H1 (cell line): ENCODE measurements at regions of chr2 and their contacts with region 1.

Region 1: DNA sequence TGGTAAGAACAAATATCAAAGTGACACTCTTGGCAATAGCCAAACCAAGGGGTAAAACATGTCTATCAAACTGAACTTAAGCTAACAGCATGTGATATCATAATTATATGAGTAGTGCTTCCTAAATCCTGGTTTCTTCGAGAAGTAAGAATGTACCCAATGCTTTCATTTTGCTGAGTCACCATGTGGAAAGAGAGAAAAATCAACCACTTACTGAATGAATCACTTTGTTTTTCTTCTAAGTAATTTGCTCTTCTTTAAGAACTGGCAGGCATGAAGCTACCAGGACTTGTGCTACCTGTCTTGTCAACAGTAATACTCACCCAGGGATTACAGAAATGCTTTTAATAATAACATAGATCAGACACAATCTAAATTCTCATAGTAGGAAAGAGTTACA is 19.0 kb upstream of the DUSP19 start:
- DNase-seq: no peak
- H3K4me3 ChIP-seq: no peak overlapping the region
- H3K27ac ChIP-seq: no peak overlapping the region
- H3K4me1 ChIP-seq: no peaks in the 10 kb centered on the region
- H3K27me3 ChIP-seq: no peaks in the 10 kb centered on the region
- CTCF ChIP-seq: no peak
- EP300 ChIP-seq: no peak
- POLR2A ChIP-seq: no peak
- RAD21 ChIP-seq: no peak

Region 2: GRCh38 chr2:182937870-182938269 is 121.7 kb before region 1 on chr2:
- CTCF ChIA-PET with region 1: no interaction called
- POLR2A ChIA-PET with region 1: no interaction called
- DNase-seq: no peak
- H3K4me3 ChIP-seq: no peak overlapping the region
- H3K27ac ChIP-seq: no peak overlapping the region
- H3K4me1 ChIP-seq: no peaks in the 10 kb centered on the region
- H3K27me3 ChIP-seq: no peaks in the 10 kb centered on the region
- CTCF ChIP-seq: no peak
- EP300 ChIP-seq: no peak
- POLR2A ChIP-seq: no peak
- RAD21 ChIP-seq: no peak

Region 3: GRCh38 chr2:183070942-183071844 is 11.6 kb after region 1 on chr2:
- CTCF ChIA-PET with region 1: interaction called, 38 read pairs
- POLR2A ChIA-PET with region 1: interaction called, 3 read pairs
- DNase-seq: peak; percentile 51 to 89
- H3K4me3 ChIP-seq: no peak overlapping the region
- H3K27ac ChIP-seq: no peak overlapping the region
- H3K4me1 ChIP-seq: peaks cover 0 to 1% (median 0%) of the 10 kb centered on the region in 4 experiments; a peak in 2 of 7 replicates
- H3K27me3 ChIP-seq: no peaks in the 10 kb centered on the region
- CTCF ChIP-seq: peak; percentile 61 to 95 (median 92)
- EP300 ChIP-seq: no peak
- POLR2A ChIP-seq: no peak
- RAD21 ChIP-seq: peak; percentile 57 to 72